PC-3 (cell line): ENCODE measurements at regions of chr4 and their contacts with region 1.

Region 1: DNA sequence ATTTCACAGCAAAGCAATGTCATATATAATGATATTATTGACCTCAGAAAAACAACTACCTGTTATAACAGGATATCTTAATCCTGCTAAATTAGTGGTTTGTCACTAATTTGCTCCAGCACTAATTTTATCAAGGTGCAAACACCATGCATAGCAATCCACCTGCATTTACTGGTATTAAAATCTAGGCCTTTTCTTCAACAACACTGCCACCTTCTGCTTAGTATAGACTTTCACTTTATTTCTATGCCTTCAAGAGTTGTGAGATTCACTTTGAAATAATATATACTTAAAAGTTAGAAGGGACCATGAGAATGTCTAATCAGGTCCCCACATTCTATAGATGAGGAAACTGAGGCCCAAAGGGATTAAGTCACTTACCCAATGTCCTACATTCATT is 82.1 kb upstream of the IQCM start:
- DNase-seq: peak; percentile 18
- ATAC-seq: peak; percentile 62
- H3K4me3 ChIP-seq: no peak overlapping the region
- H3K27ac ChIP-seq: no peak overlapping the region
- H3K4me1 ChIP-seq: no peaks in the 10 kb centered on the region
- H3K27me3 ChIP-seq: no peaks in the 10 kb centered on the region
- CTCF ChIP-seq: peak; percentile 66

Region 2: DNA sequence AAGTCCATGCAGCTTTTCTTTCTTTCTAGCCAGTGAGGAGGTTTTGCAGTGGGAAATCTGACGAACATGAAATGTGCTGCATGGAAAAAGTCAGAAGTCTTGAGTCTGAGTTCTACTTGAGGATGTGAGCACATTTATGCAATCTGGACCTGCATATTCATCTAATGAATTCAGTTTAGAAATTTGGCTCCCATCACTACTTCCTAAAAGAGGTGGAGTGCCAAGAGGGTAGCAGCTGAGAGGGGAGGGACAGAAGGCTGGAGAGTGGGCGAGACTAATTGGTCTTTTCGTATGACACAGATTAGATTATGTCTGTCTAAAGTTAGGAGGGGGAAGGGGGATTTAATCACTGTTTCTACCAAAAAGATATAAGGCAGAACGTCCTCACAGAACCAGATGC is 618.0 kb before region 1 on chr4:
- CTCF ChIA-PET with region 1: no interaction called
- POLR2A ChIA-PET with region 1: no interaction called
- intact Hi-C with region 1: loop called (anchors 10 kb)
- DNase-seq: no peak
- ATAC-seq: no peak
- H3K4me3 ChIP-seq: no peak overlapping the region
- H3K27ac ChIP-seq: no peak overlapping the region
- H3K4me1 ChIP-seq: no peaks in the 10 kb centered on the region
- H3K27me3 ChIP-seq: no peaks in the 10 kb centered on the region
- CTCF ChIP-seq: no peak

Region 3: GRCh38 chr4:149370785-149371420 is 526.9 kb before region 1 on chr4:
- CTCF ChIA-PET with region 1: no interaction called
- POLR2A ChIA-PET with region 1: no interaction called
- intact Hi-C with region 1: loop called (anchors 1 kb)
- DNase-seq: peak; percentile 65
- ATAC-seq: peak; percentile 77
- H3K4me3 ChIP-seq: no peak overlapping the region
- H3K27ac ChIP-seq: no peak overlapping the region
- H3K4me1 ChIP-seq: no peaks in the 10 kb centered on the region
- H3K27me3 ChIP-seq: no peaks in the 10 kb centered on the region
- CTCF ChIP-seq: peak; percentile 62

Region 4: GRCh38 chr4:149549911-149550310 is 347.9 kb before region 1 on chr4:
- CTCF ChIA-PET with region 1: no interaction called
- POLR2A ChIA-PET with region 1: no interaction called
- intact Hi-C with region 1: loop called (anchors 2 kb)
- DNase-seq: peak; percentile 22
- ATAC-seq: no peak
- H3K4me3 ChIP-seq: no peak overlapping the region
- H3K27ac ChIP-seq: no peak overlapping the region
- H3K4me1 ChIP-seq: no peaks in the 10 kb centered on the region
- H3K27me3 ChIP-seq: no peaks in the 10 kb centered on the region
- CTCF ChIP-seq: 0 out of 2 replicates have a peak, but pooled peaks have one; percentile 19

Region 5: DNA sequence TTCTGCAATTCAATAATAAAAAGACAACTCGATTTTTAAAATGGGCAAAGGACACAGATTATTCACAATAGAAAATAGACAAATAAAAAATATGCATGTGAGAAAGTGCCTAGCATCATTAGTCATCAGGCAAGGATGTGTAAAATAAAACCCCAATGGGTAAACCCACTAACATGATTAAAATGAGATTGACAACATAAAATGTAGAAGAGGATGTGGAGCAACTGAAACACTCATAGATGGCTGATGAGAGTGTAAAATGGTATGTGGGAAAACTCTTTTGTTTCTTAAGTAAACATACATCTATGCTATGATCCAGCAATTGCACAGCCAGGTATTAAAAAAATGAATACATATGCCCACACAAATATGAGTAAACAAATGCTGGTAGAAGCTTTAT is 259.7 kb before region 1 on chr4:
- CTCF ChIA-PET with region 1: no interaction called
- POLR2A ChIA-PET with region 1: no interaction called
- intact Hi-C with region 1: loop called (anchors 5 kb)
- DNase-seq: peak; percentile 79
- ATAC-seq: peak; percentile 94
- H3K4me3 ChIP-seq: no peak overlapping the region
- H3K27ac ChIP-seq: peak overlapping the region; percentile 70
- H3K4me1 ChIP-seq: peaks cover 15% of the 10 kb centered on the region
- H3K27me3 ChIP-seq: no peaks in the 10 kb centered on the region
- CTCF ChIP-seq: no peak

Region 6: DNA sequence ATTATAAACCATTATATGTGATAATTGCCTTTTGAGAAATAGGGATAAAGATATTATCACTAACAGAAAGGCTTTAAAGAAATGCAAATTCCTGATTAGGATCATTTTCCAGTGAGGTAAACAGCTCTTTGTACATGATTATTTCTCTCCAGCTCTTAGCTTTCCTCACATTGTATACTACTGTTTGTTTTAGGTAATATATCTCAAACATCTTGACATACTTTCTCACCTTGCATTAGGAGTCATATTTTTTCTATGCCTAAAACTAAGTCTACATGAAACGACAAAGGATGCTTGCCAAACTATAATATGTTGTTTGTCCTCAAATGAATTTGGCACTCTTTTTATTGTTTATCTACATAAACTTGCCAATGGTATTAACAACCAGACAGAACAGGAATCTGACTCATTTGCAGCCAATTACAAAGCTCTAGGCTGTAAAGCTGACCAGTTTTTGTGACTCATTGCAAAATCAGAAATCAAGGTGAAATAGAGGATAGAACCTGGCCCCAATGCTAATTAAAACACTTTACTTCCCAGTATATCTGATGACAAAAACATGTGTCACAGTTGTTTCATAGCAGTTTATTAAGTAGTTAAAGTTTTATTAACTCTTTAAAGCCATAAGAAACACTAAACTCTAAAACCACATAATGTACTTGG is 189.1 kb before region 1 on chr4:
- CTCF ChIA-PET with region 1: no interaction called
- POLR2A ChIA-PET with region 1: no interaction called
- intact Hi-C with region 1: loop called (anchors 2 kb)
- DNase-seq: peak; percentile 85
- ATAC-seq: peak; percentile 89
- H3K4me3 ChIP-seq: no peak overlapping the region
- H3K27ac ChIP-seq: peak overlapping the region; percentile 78
- H3K4me1 ChIP-seq: peaks cover 25% of the 10 kb centered on the region
- H3K27me3 ChIP-seq: no peaks in the 10 kb centered on the region
- CTCF ChIP-seq: no peak

Region 7: DNA sequence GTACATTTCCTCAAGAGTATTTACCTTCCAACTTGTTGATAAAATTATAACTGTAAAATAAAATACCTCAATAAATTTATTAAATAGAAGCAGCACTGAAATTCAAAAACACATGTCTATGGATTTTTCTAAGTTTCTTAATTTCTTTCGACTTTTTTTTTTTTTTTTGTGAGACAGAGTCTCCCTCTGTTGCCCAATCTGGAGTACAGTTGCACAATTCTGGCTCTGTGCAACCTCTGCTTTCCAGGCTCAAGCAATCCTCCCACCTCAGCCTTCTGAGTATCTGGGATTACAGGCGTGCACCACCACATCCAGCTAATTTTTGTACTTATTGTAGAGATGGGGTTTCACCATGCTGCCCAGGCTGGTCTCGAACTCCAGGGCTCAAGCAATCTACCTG is 162.0 kb before region 1 on chr4:
- CTCF ChIA-PET with region 1: no interaction called
- POLR2A ChIA-PET with region 1: no interaction called
- intact Hi-C with region 1: loop called (anchors 10 kb)
- DNase-seq: peak; percentile 14
- ATAC-seq: no peak
- H3K4me3 ChIP-seq: no peak overlapping the region
- H3K27ac ChIP-seq: no peak overlapping the region
- H3K4me1 ChIP-seq: no peaks in the 10 kb centered on the region
- H3K27me3 ChIP-seq: no peaks in the 10 kb centered on the region
- CTCF ChIP-seq: peak; percentile 32